Ascending aorta (tissue), 2 donors: ENCODE measurements at regions of chr1 and their contacts with region 1.

Region 1: GRCh38 chr1:93680757-93681550 is 683 bp downstream of the BCAR3 start:
- DNase-seq: peak; percentile 63 to 90
- H3K4me3 ChIP-seq: peak overlapping the region; percentile 79 to 93
- H3K27ac ChIP-seq: peak overlapping the region; percentile 90 to 92
- H3K4me1 ChIP-seq: peaks cover 2 to 11% of the 10 kb centered on the region in 2 donors
- H3K27me3 ChIP-seq: no peaks in the 10 kb centered on the region
- CTCF ChIP-seq: peak; percentile 61 to 66 (median 66)

Region 2: GRCh38 chr1:92577261-92577895 is 1103.6 kb before region 1 on chr1:
- intact Hi-C with region 1: no loop called
- DNase-seq: no peak
- H3K4me3 ChIP-seq: no peak overlapping the region
- H3K27ac ChIP-seq: no peak overlapping the region
- H3K4me1 ChIP-seq: no peaks in the 10 kb centered on the region
- H3K27me3 ChIP-seq: no peaks in the 10 kb centered on the region
- CTCF ChIP-seq: no peak

Region 3: GRCh38 chr1:93629099-93630059 is 51.6 kb before region 1 on chr1:
- intact Hi-C with region 1: loop called (anchors 1 kb)
- DNase-seq: no peak
- H3K4me3 ChIP-seq: no peak overlapping the region
- H3K27ac ChIP-seq: peak overlapping the region in 1 of 2 donors; percentile 44
- H3K4me1 ChIP-seq: peaks cover 0 to 19% of the 10 kb centered on the region in 2 donors
- H3K27me3 ChIP-seq: no peaks in the 10 kb centered on the region
- CTCF ChIP-seq: peak; percentile 69 to 87 (median 82)

Region 4: DNA sequence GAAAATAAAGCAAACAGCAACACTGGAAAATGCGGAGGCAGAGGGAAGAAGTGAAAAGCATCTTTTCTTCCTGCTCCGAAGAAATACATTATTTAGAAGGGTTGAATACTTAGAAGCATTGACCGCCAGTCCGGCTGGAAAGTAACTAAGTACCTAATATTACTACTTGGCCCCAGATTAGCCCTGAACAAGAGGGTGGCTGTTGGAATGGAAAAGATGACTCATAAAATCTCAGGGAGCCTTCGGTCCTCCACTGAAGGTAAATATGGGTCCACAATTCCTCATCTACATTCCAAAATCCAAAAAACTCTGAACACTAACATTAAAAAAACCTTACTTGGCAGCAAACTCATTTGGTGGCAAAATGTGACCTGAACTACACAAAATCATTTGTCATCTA is 39.4 kb before region 1 on chr1:
- intact Hi-C with region 1: loop called (anchors 1 kb)
- DNase-seq: no peak
- H3K4me3 ChIP-seq: no peak overlapping the region
- H3K27ac ChIP-seq: peak overlapping the region; percentile 69 to 73
- H3K4me1 ChIP-seq: peaks cover 2 to 14% of the 10 kb centered on the region in 2 donors
- H3K27me3 ChIP-seq: no peaks in the 10 kb centered on the region
- CTCF ChIP-seq: no peak

Region 5: DNA sequence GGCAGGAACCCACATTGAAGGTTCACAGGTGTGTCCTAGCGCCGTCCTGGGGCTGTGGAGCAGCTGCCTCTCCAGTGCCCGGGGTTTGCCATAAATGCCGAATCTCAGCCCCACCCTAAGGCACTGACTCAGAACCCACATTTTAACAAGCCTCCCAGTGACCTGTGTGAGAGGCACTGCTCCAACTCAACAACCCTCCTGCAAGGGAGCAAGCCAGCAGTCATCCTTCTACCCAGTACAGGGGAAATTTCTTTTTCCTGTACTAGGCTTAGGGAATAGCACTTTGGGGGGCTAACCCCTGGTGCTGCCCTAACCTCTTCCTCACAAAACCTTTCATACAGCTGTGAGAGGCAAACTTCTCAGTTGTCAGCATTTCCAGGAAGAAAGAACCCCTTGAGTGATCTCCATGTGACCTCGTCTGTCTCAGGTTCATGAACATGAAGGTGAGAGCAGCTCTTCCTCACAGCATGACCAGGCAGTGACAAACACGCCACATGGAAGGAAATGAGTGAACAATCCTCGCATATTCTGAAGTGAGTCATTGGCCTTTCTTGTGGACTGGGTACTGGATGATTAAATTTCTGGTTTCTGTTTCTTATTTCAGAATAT is 12.1 kb after region 1 on chr1:
- intact Hi-C with region 1: loop called (anchors 1 kb)
- DNase-seq: peak in 1 of 2 donors; percentile 80
- H3K4me3 ChIP-seq: peak overlapping the region in 1 of 2 donors; percentile 27
- H3K27ac ChIP-seq: peak overlapping the region; percentile 74 to 89
- H3K4me1 ChIP-seq: peaks cover 5 to 29% of the 10 kb centered on the region in 2 donors
- H3K27me3 ChIP-seq: no peaks in the 10 kb centered on the region
- CTCF ChIP-seq: no peak

Region 6: GRCh38 chr1:93722081-93723031 is 41.4 kb after region 1 on chr1:
- intact Hi-C with region 1: loop called (anchors 1 kb)
- DNase-seq: peak in 1 of 2 donors; percentile 70
- H3K4me3 ChIP-seq: no peak overlapping the region
- H3K27ac ChIP-seq: peak overlapping the region; percentile 59 to 70
- H3K4me1 ChIP-seq: peaks cover 17 to 24% of the 10 kb centered on the region in 2 donors
- H3K27me3 ChIP-seq: no peaks in the 10 kb centered on the region
- CTCF ChIP-seq: no peak